B cell (primary cell): ENCODE measurements at regions of chr17 and their contacts with region 1.

Region 1: GRCh38 chr17:81860756-81861518 is 602 bp upstream of the P4HB start:
- DNase-seq: no peak
- ATAC-seq: peak; percentile 89
- H3K4me3 ChIP-seq: peak overlapping the region; percentile 39 to 75 (median 71)
- H3K4me3 Mint-ChIP-seq: peak overlapping the region; percentile 92
- H3K27ac ChIP-seq: peak overlapping the region; percentile 94 to 98
- H3K27ac Mint-ChIP-seq: peak overlapping the region; percentile 96
- H3K4me1 ChIP-seq: peaks cover 17 to 26% of the 10 kb centered on the region in 2 donors
- H3K4me1 Mint-ChIP-seq: peaks cover 32% of the 10 kb centered on the region
- H3K27me3 ChIP-seq: no peaks in the 10 kb centered on the region
- H3K27me3 Mint-ChIP-seq: no peaks in the 10 kb centered on the region
- CTCF ChIP-seq: no peak

Region 2: GRCh38 chr17:81711814-81712467 is 149.0 kb before region 1 on chr17 and contains the start of gene SLC25A10:
- CTCF ChIA-PET with region 1: no interaction called
- POLR2A ChIA-PET with region 1: no interaction called
- intact Hi-C with region 1: loop called (anchors 1 kb)
- DNase-seq: peak; percentile 87
- ATAC-seq: peak; percentile 89
- H3K4me3 ChIP-seq: peak within 1 kb of the TSS in 4 of 5 experiments; percentile 35 to 80 (median 62)
- H3K4me3 Mint-ChIP-seq: peak within 1 kb of the TSS; percentile 89
- H3K27ac ChIP-seq: no peak within 1 kb of the TSS
- H3K27ac Mint-ChIP-seq: peak within 1 kb of the TSS; percentile 78
- H3K4me1 ChIP-seq: peaks cover 15 to 25% of the 10 kb centered on the region in 2 donors
- H3K4me1 Mint-ChIP-seq: peaks cover 12% of the 10 kb centered on the region
- H3K27me3 ChIP-seq: peaks cover 0 to 3% (median 0%) of the 10 kb centered on the region in 4 experiments
- H3K27me3 Mint-ChIP-seq: no peaks in the 10 kb centered on the region
- CTCF ChIP-seq: peak; percentile 15
- total RNA-seq, gene SLC25A10: 5.0 and 6.5 TPM in 2 replicates

Region 3: GRCh38 chr17:81808778-81809555 is 52.0 kb before region 1 on chr17:
- CTCF ChIA-PET with region 1: no interaction called
- POLR2A ChIA-PET with region 1: no interaction called
- intact Hi-C with region 1: no loop called
- DNase-seq: no peak
- ATAC-seq: no peak
- H3K4me3 ChIP-seq: no peak overlapping the region
- H3K4me3 Mint-ChIP-seq: no peak overlapping the region
- H3K27ac ChIP-seq: no peak overlapping the region
- H3K27ac Mint-ChIP-seq: no peak overlapping the region
- H3K4me1 ChIP-seq: no peaks in the 10 kb centered on the region
- H3K4me1 Mint-ChIP-seq: no peaks in the 10 kb centered on the region
- H3K27me3 ChIP-seq: peaks cover 0 to 32% (median 5%) of the 10 kb centered on the region in 4 experiments
- H3K27me3 Mint-ChIP-seq: peaks cover 11% of the 10 kb centered on the region
- CTCF ChIP-seq: no peak

Region 4: GRCh38 chr17:81871387-81872230 is 10.7 kb after region 1 on chr17:
- CTCF ChIA-PET with region 1: interaction called, 7 read pairs
- POLR2A ChIA-PET with region 1: interaction called, 15 read pairs
- intact Hi-C with region 1: loop called (anchors 1 kb)
- DNase-seq: peak; percentile 96
- ATAC-seq: peak; percentile 2
- H3K4me3 ChIP-seq: peak overlapping the region; percentile 27 to 90 (median 84)
- H3K4me3 Mint-ChIP-seq: peak overlapping the region; percentile 89
- H3K27ac ChIP-seq: peak overlapping the region; percentile 90 to 99
- H3K27ac Mint-ChIP-seq: peak overlapping the region; percentile 98
- H3K4me1 ChIP-seq: peaks cover 22 to 39% of the 10 kb centered on the region in 2 donors
- H3K4me1 Mint-ChIP-seq: peaks cover 32% of the 10 kb centered on the region
- H3K27me3 ChIP-seq: no peaks in the 10 kb centered on the region
- H3K27me3 Mint-ChIP-seq: no peaks in the 10 kb centered on the region
- CTCF ChIP-seq: peak; percentile 50

Region 5: DNA sequence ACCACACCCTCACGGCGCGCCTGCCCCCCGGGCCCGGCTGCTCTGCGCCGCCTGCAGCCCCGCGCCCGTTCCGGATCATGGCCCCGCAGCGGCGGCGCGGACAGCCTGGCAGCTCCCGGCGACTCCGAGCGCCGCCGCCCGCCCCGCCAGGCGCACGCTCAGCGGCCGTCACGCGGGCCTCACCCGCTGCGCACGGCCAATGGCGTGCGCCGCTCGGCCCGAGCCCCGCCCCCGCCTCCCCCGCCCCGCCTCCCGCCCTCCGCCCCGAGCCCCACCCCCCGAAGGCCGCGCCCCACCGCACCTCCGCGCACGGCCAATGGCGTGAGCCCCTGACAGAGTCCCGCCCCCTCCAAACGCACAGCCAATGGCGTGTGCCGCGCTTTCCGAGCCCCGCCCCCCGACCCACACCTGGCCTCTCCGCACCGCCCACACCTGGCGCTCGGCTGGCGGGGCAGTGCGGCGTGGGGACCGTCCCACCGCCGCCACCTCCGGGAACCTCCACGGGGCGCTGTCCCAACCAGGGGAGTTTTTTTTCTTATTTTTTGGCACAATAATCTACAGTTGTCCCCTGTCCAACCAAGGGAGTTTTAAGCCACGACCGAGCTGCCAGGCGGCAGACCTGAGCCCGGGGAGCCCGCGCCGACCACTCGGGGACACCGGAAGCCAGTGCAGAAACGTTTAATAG is 50.5 kb after region 1 on chr17 and contains the start of gene PCYT2:
- CTCF ChIA-PET with region 1: no interaction called
- POLR2A ChIA-PET with region 1: no interaction called
- intact Hi-C with region 1: loop called (anchors 1 kb)
- DNase-seq: peak; percentile 94
- ATAC-seq: peak; percentile 95
- H3K4me3 ChIP-seq: peak within 1 kb of the TSS; percentile 43 to 75 (median 65)
- H3K4me3 Mint-ChIP-seq: peak within 1 kb of the TSS; percentile 86
- H3K27ac ChIP-seq: peak within 1 kb of the TSS in 1 of 2 donors; percentile 59
- H3K27ac Mint-ChIP-seq: peak within 1 kb of the TSS; percentile 63
- H3K4me1 ChIP-seq: peaks cover 10 to 19% of the 10 kb centered on the region in 2 donors
- H3K4me1 Mint-ChIP-seq: peaks cover 15% of the 10 kb centered on the region
- H3K27me3 ChIP-seq: no peaks in the 10 kb centered on the region
- H3K27me3 Mint-ChIP-seq: no peaks in the 10 kb centered on the region
- CTCF ChIP-seq: no peak
- total RNA-seq, gene PCYT2: 34.2 and 34.9 TPM in 2 replicates

Region 6: GRCh38 chr17:81941790-81942553 is 81.0 kb after region 1 on chr17:
- CTCF ChIA-PET with region 1: no interaction called
- POLR2A ChIA-PET with region 1: no interaction called
- intact Hi-C with region 1: loop called (anchors 1 kb)
- DNase-seq: no peak
- ATAC-seq: no peak
- H3K4me3 ChIP-seq: no peak overlapping the region
- H3K4me3 Mint-ChIP-seq: no peak overlapping the region
- H3K27ac ChIP-seq: no peak overlapping the region
- H3K27ac Mint-ChIP-seq: no peak overlapping the region
- H3K4me1 ChIP-seq: peaks cover 5 to 12% of the 10 kb centered on the region in 2 donors
- H3K4me1 Mint-ChIP-seq: peaks cover 4% of the 10 kb centered on the region
- H3K27me3 ChIP-seq: peaks cover 0 to 19% (median 2%) of the 10 kb centered on the region in 4 experiments
- H3K27me3 Mint-ChIP-seq: peaks cover 5% of the 10 kb centered on the region
- CTCF ChIP-seq: no peak